Natural killer cell (primary cell): ENCODE measurements at regions of chr3 and their contacts with region 1.

Region 1: DNA sequence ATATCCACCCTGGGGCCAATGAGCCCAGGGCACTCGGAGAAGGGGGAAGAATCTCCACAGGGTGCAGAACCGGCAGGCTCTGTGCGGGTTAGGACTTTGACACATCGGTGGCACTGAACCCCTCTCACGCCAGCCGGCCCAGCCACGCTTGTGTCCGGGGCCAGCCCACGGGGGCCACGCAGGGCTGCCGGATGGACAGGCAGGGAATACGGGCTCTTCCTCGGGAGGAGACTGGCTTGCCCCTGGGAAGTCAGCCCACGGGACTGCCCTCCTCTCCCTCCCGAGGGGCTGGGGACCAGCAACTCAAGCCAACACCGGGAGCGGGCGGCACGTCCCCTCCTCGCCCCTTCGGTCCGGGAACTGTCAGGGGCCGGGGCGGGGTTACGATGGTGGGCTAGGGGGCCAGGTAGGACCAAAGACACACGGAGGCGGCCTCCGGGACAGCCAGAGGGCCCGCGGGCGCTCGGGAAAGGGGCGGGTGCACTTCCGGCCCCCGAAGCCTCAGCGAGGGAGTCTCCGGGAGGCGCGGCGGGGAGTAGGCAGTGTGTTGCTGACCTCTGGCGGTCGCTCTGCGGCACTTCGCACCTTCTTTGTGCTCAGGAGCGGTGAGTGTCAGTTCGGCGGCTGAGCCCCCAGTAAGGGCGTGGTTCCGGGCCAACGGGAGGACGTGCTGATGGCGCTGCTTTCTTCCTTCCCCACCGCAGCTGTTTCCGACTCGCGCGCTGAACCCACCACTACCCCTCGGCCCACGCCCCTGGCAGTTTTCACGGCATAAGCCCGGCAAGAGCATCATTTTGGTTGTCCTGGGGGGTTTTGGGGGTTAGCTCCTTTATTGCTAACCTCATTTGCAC is 5.1 kb upstream of the CYP8B1 start:
- DNase-seq: peak; percentile 71 to 95
- ATAC-seq: peak; percentile 96 to 98 (median 98)
- H3K4me3 ChIP-seq: peak overlapping the region; percentile 40
- H3K4me3 Mint-ChIP-seq: peak overlapping the region; percentile 86
- H3K27ac ChIP-seq: peak overlapping the region; percentile 1
- H3K27ac Mint-ChIP-seq: peak overlapping the region; percentile 76 to 89
- H3K4me1 ChIP-seq: peaks cover 14% of the 10 kb centered on the region
- H3K4me1 Mint-ChIP-seq: peaks cover 7 to 17% of the 10 kb centered on the region in 2 donors
- H3K27me3 ChIP-seq: no peaks in the 10 kb centered on the region
- H3K27me3 Mint-ChIP-seq: no peaks in the 10 kb centered on the region
- CTCF ChIP-seq: peak; percentile 92

Region 2: DNA sequence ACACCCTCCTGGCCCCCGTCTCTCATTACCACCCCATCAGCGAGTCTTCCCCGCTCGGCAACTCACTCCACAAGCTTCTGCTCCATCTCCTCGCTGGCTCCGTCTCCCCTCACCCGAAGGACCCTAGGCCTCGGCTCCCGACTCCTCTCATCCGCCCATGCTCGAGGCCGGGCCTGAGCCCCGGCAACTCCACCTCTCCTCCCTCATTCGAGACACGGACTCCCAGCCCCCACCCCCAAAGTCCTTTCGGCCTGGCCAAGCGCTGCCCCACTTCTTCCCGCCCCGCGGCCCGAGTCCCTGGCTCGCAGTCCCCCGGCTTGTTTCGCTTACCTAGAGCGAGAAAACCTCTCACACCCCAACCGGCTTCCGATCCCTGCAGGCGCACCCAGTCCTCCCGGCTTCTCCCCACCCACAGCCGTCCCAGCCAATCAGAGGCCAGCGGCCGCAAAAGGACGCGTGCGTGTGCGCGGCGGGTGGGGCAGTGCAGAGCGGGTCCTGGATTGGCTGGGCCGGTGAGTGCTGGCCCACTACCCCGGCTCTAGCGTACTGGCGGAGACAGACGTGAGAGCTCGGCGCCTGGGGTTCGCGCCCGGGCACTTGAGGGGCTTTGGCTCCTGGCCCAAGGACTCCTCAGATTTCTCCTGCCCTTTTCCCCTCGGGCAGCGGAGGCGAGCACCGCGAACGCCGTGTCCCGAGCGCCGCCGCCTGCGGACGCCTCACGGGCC is 76.6 kb before region 1 on chr3 and contains the start of gene HIGD1A:
- intact Hi-C with region 1: loop called (anchors 1 kb)
- DNase-seq: peak; percentile 88 to 96
- ATAC-seq: peak; percentile 97 to 100 (median 99)
- H3K4me3 ChIP-seq: peak within 1 kb of the TSS; percentile 98
- H3K4me3 Mint-ChIP-seq: peak within 1 kb of the TSS; percentile 91
- H3K27ac ChIP-seq: peak within 1 kb of the TSS; percentile 89
- H3K27ac Mint-ChIP-seq: peak within 1 kb of the TSS; percentile 83 to 97
- H3K4me1 ChIP-seq: peaks cover 18% of the 10 kb centered on the region
- H3K4me1 Mint-ChIP-seq: peaks cover 38 to 46% of the 10 kb centered on the region in 2 donors
- H3K27me3 ChIP-seq: no peaks in the 10 kb centered on the region
- H3K27me3 Mint-ChIP-seq: peaks cover 13 to 26% of the 10 kb centered on the region in 2 donors
- CTCF ChIP-seq: no peak
- total RNA-seq, gene HIGD1A: 24.5 to 28.5 (median 28.2) TPM

Region 3: GRCh38 chr3:42831321-42831713 is 49.5 kb before region 1 on chr3:
- intact Hi-C with region 1: loop called (anchors 1 kb)
- DNase-seq: peak; percentile 69 to 82
- ATAC-seq: peak; percentile 68 to 89 (median 85)
- H3K4me3 ChIP-seq: no peak overlapping the region
- H3K4me3 Mint-ChIP-seq: no peak overlapping the region
- H3K27ac ChIP-seq: no peak overlapping the region
- H3K27ac Mint-ChIP-seq: peak overlapping the region in 1 of 2 donors; percentile 16
- H3K4me1 ChIP-seq: peaks cover 3% of the 10 kb centered on the region
- H3K4me1 Mint-ChIP-seq: peaks cover 8 to 13% of the 10 kb centered on the region in 2 donors
- H3K27me3 ChIP-seq: peaks cover 2% of the 10 kb centered on the region
- H3K27me3 Mint-ChIP-seq: peaks cover 11 to 14% of the 10 kb centered on the region in 2 donors
- CTCF ChIP-seq: peak; percentile 89